Naive thymus-derived CD4-positive, alpha-beta T cell (primary cell): ENCODE measurements at regions of chr11 and their contacts with region 1.

Region 1: GRCh38 chr11:31804312-31805036 is 6.6 kb downstream of the PAX6 start:
- DNase-seq: no peak
- ATAC-seq: no peak
- H3K4me3 ChIP-seq: no peak overlapping the region
- H3K4me3 Mint-ChIP-seq: peak overlapping the region; percentile 36 to 82 (median 72)
- H3K27ac ChIP-seq: no peak overlapping the region
- H3K27ac Mint-ChIP-seq: peak overlapping the region in 3 of 9 donors; percentile 5 to 78 (median 34)
- H3K4me1 ChIP-seq: peaks cover 5 to 26% of the 10 kb centered on the region in 2 donors
- H3K4me1 Mint-ChIP-seq: peaks cover 30 to 60% (median 52%) of the 10 kb centered on the region in 7 donors
- H3K27me3 ChIP-seq: peaks cover 22 to 68% of the 10 kb centered on the region in 2 donors
- H3K27me3 Mint-ChIP-seq: peaks cover 86 to 96% (median 87%) of the 10 kb centered on the region in 5 donors

Region 2: GRCh38 chr11:31786996-31787685 is 17.3 kb before region 1 on chr11:
- CTCF ChIA-PET with region 1: no interaction called
- POLR2A ChIA-PET with region 1: no interaction called
- intact Hi-C with region 1: no loop called
- DNase-seq: no peak
- ATAC-seq: no peak
- H3K4me3 ChIP-seq: no peak overlapping the region
- H3K4me3 Mint-ChIP-seq: no peak overlapping the region
- H3K27ac ChIP-seq: no peak overlapping the region
- H3K27ac Mint-ChIP-seq: peak overlapping the region in 1 of 9 donors; percentile 43
- H3K4me1 ChIP-seq: no peaks in the 10 kb centered on the region
- H3K4me1 Mint-ChIP-seq: no peaks in the 10 kb centered on the region
- H3K27me3 ChIP-seq: no peaks in the 10 kb centered on the region
- H3K27me3 Mint-ChIP-seq: peaks cover 3 to 12% (median 4%) of the 10 kb centered on the region in 5 donors

Region 3: DNA sequence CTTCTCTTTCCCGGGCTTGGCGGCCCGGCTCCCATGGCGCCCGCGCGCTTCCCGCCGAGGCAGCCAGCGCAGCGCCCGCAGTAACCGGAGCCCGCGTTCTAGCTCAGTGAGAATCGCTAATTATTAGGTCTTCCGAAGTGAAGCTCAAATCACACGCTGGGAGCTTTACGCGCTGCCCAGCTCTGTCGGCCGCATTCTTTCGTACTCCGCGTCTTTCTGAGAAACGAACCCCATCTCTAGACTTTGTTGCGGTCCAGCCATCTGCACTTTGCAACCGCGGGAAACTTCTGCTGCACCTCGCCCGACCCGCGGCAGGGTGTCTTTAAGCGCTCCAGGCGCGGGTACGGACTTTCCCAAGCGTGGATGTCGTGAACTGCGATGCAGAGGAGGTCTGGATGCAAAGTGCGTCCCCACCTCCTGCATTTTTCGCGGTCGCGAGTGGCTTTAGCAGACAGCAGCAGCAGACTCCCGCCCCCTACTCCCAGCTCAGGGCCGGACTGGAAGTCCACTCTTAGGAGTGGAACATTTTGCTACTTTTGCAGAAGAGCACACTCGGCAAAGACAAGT is 12.7 kb after region 1 on chr11:
- CTCF ChIA-PET with region 1: no interaction called
- POLR2A ChIA-PET with region 1: no interaction called
- intact Hi-C with region 1: loop called in 1 of 2 experiments (anchors 2 kb)
- DNase-seq: no peak
- ATAC-seq: no peak
- H3K4me3 ChIP-seq: peak overlapping the region; percentile 24
- H3K4me3 Mint-ChIP-seq: peak overlapping the region; percentile 45 to 83 (median 76)
- H3K27ac ChIP-seq: no peak overlapping the region
- H3K27ac Mint-ChIP-seq: peak overlapping the region in 1 of 9 donors; percentile 71
- H3K4me1 ChIP-seq: peaks cover 12 to 17% of the 10 kb centered on the region in 2 donors
- H3K4me1 Mint-ChIP-seq: peaks cover 7 to 53% (median 39%) of the 10 kb centered on the region in 7 donors
- H3K27me3 ChIP-seq: peaks cover 7 to 57% of the 10 kb centered on the region in 2 donors
- H3K27me3 Mint-ChIP-seq: peaks cover 63 to 88% (median 67%) of the 10 kb centered on the region in 5 donors

Region 4: GRCh38 chr11:31834237-31834636 is 29.8 kb after region 1 on chr11:
- CTCF ChIA-PET with region 1: no interaction called
- POLR2A ChIA-PET with region 1: no interaction called
- intact Hi-C with region 1: no loop called
- DNase-seq: no peak
- ATAC-seq: no peak
- H3K4me3 ChIP-seq: no peak overlapping the region
- H3K4me3 Mint-ChIP-seq: no peak overlapping the region
- H3K27ac ChIP-seq: no peak overlapping the region
- H3K27ac Mint-ChIP-seq: no peak overlapping the region
- H3K4me1 ChIP-seq: no peaks in the 10 kb centered on the region
- H3K4me1 Mint-ChIP-seq: no peaks in the 10 kb centered on the region
- H3K27me3 ChIP-seq: peaks cover 0 to 2% of the 10 kb centered on the region in 2 donors
- H3K27me3 Mint-ChIP-seq: peaks cover 29 to 39% (median 36%) of the 10 kb centered on the region in 5 donors